Activated T-helper 1 cell treated with anti-CD3 and anti-CD28 coated beads, Interleukin-12 subunit alpha, Interleukin-12 subunit beta, Interleukin-2, Interleukin-4 antibody, amounts not matched to agents 30 ng/mL and 10 ng/mL and 1 ng/mL, durations not matched to agents 14 hours and 24 hours and 36 hours (primary cell): ENCODE measurements at regions of chr17 and their contacts with region 1.

Region 1: GRCh38 chr17:67993596-67994361 is 2.5 kb downstream of the C17orf58 start:
- DNase-seq: peak; percentile 68
- H3K4me3 Mint-ChIP-seq: peak overlapping the region; percentile 85
- H3K27ac Mint-ChIP-seq: peak overlapping the region; percentile 84
- H3K4me1 Mint-ChIP-seq: peaks cover 30% of the 10 kb centered on the region
- H3K27me3 Mint-ChIP-seq: peaks cover 26% of the 10 kb centered on the region

Region 2: DNA sequence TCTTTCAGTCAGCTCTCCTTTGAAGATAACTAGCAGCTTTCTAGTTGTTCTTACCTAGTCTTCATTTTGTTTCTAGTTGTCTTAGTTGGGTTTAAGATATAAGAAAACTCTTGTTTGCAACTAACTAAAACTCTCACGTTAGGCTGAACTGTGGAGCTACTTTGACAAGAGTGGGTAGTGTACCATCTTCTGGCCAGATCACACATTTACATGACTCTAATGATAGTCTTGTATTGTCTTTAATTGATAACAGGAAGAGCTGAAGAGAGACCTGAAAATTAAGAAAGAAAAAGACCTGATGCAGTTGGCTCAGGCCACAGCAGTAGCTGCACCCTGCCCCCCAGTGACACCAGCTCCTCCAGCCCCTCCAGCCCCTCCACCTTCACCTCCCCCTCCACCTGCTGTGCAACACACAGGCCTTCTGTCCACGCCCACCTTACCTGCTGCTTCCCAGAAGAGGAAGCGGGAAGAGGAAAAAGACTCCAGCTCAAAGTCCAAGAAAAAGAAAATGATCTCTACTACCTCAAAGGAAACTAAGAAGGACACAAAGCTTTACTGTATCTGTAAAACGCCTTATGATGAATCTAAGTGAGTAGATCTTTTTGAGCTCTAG is 34.4 kb before region 1 on chr17:
- intact Hi-C with region 1: loop called (anchors 2 kb)
- DNase-seq: no peak
- H3K4me3 Mint-ChIP-seq: no peak overlapping the region
- H3K27ac Mint-ChIP-seq: peak overlapping the region; percentile 63
- H3K4me1 Mint-ChIP-seq: peaks cover 7% of the 10 kb centered on the region
- H3K27me3 Mint-ChIP-seq: no peaks in the 10 kb centered on the region

Region 3: GRCh38 chr17:68011199-68011665 is 17.5 kb after region 1 on chr17:
- intact Hi-C with region 1: loop called (anchors 1 kb)
- DNase-seq: peak; percentile 49
- H3K4me3 Mint-ChIP-seq: peak overlapping the region; percentile 58
- H3K27ac Mint-ChIP-seq: no peak overlapping the region
- H3K4me1 Mint-ChIP-seq: peaks cover 6% of the 10 kb centered on the region
- H3K27me3 Mint-ChIP-seq: peaks cover 23% of the 10 kb centered on the region

Region 4: DNA sequence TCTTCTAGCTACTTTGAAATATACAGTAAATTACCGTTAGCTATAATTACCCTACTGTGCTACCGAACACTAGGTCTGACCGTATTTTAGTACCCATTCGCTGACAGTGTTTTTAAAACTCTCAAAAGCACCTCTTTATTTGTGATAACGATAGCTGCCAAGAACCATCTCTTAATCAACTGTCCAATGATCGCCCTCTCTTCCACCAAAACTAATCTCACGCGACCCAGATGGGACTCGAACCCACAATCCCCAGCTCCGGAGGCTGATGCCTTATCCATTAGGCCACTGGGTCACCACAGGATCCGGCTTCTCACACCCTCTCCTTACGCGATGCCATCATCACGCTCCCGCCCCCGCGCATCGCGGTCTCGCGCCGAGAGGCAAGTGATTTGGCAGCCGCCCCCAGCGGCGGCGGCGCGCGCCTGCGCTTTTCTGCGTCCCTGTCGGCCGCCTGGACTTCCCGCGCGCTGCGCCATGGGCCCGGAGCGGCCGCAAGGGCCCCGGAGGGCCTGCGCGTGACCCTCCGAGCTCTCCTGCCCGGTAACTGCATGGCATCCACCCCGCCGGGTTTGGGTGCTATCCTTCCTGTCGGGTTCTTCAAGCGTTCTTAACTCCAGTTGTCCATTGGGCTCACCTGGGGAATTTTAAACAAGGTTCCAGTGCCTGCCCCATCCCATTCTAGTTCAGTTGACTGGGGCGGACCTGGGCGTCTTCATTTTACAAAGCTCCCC is 26.1 kb after region 1 on chr17:
- intact Hi-C with region 1: loop called (anchors 1 kb)
- DNase-seq: peak; percentile 96
- H3K4me3 Mint-ChIP-seq: peak overlapping the region; percentile 87
- H3K27ac Mint-ChIP-seq: peak overlapping the region; percentile 98
- H3K4me1 Mint-ChIP-seq: peaks cover 21% of the 10 kb centered on the region
- H3K27me3 Mint-ChIP-seq: peaks cover 16% of the 10 kb centered on the region

Region 5: DNA sequence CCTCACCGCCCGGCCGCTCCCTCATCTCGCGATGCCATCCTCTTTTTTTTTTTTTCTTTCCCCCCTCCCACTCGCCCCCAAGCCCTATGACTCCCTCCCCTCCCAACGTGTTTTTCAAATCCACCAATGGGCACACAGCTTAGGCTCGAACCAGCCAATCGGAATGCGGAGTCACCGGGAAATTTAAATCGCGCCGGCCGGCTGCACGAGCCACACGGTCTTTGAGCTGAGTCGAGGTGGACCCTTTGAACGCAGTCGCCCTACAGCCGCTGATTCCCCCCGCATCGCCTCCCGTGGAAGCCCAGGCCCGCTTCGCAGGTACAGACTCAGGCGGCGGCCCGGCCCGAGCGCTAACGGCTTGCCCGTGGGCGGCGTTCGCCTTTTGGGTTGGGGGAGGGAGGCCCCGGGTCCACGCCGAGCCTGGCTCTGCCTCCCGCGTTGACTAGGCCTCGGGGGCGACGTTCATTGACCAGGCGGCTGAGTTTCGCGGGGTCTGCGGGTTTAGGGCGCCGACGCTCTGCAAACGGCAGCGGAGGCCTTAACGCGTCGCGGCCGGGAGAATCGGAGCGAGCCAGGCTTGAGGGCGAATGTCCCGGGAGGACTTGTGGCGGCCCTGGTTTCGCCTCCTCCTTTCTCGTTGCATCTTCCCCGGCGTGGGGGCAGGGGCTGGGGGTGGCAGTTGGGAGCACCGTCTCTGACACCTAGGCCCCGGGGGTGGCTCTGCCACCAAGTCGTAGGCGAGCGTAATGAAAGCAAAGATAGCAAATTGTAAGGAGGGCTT is 41.9 kb after region 1 on chr17 and contains the start of gene KPNA2:
- intact Hi-C with region 1: loop called (anchors 2 kb)
- DNase-seq: peak; percentile 93
- H3K4me3 Mint-ChIP-seq: peak within 1 kb of the TSS; percentile 96
- H3K27ac Mint-ChIP-seq: peak within 1 kb of the TSS; percentile 97
- H3K4me1 Mint-ChIP-seq: peaks cover 23% of the 10 kb centered on the region
- H3K27me3 Mint-ChIP-seq: no peaks in the 10 kb centered on the region
- total RNA-seq, gene KPNA2: 205 and 224 TPM in 2 replicates

Region 6: DNA sequence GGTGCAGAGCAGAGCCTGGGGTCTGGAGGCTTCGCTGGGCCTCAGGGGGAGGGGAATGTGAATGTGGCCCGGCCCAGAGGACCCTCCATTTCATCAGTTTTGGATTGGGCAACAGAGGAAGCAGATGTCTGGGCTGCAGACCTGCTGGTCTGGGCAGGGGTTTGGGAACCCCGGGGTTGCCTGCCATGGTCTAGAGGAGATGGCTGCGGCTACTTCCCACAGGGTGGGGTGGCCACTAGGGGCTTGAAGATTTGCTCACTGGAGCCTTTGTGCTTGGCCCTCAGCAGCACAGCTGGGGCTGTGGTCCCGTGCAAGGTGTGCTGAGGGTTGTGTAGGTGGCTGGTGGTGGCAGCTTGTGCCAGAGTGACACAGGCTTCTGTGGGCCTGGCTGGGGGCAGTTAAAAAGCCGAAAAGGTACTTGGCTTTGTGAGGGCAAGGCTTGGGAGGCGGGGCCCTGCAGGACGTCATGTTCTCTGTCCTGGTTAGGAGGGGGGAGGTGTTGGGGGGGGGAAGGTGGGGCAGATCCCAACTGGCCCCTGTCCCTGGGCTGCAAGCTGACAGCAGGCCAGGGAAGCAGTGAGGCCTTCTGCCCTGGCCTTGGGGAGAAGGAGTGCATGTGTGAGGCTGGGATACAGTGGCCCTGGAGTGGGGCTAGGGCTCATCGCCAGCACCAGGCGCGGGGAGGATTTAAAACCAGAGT is 139.7 kb after region 1 on chr17:
- intact Hi-C with region 1: no loop called
- DNase-seq: no peak
- H3K4me3 Mint-ChIP-seq: no peak overlapping the region
- H3K27ac Mint-ChIP-seq: no peak overlapping the region
- H3K4me1 Mint-ChIP-seq: no peaks in the 10 kb centered on the region
- H3K27me3 Mint-ChIP-seq: no peaks in the 10 kb centered on the region

Region 7: DNA sequence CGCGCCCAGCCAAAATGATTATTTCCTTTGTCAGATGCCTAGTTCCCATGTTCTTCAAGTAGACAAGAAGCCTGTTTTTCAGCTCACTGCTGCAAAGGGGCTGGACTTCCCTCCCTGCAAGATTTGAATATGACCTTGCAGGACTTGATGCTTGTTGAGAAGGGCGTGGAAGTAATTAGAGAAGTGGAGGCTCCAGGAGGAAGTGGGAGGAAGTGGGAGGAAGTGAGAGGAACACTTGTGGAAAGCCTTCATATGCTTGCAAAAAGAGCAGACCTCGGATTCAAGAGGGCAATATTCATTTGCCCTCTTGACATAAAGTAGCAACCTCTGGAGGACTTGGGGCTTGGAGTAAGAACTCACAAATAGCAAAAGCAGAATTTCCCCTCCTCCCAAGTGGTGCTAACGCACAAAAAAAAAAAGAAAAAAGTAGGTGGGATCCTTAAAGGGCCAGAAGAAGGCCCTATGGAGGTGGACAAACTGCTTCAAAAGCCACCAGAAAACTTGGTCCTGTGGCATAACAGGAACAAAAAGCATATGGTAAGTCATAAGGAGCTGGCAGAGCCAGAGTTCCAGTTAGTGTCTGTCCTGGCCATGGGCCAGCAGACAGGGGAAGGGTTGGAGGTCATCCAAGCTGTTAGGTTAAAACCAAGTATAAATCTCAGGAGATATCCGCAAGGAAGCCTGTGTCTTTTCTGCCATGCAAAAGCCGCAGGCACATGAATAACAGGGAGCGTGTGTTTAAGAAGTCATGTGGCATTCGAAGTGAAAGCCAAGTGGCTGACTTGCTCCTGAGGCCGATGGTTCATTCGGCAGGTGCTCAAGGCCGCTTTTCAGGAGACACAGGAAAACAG is 497.8 kb after region 1 on chr17:
- intact Hi-C with region 1: loop called (anchors 1 kb)
- DNase-seq: no peak
- H3K4me3 Mint-ChIP-seq: no peak overlapping the region
- H3K27ac Mint-ChIP-seq: no peak overlapping the region
- H3K4me1 Mint-ChIP-seq: peaks cover 20% of the 10 kb centered on the region
- H3K27me3 Mint-ChIP-seq: peaks cover 2% of the 10 kb centered on the region

Region 8: DNA sequence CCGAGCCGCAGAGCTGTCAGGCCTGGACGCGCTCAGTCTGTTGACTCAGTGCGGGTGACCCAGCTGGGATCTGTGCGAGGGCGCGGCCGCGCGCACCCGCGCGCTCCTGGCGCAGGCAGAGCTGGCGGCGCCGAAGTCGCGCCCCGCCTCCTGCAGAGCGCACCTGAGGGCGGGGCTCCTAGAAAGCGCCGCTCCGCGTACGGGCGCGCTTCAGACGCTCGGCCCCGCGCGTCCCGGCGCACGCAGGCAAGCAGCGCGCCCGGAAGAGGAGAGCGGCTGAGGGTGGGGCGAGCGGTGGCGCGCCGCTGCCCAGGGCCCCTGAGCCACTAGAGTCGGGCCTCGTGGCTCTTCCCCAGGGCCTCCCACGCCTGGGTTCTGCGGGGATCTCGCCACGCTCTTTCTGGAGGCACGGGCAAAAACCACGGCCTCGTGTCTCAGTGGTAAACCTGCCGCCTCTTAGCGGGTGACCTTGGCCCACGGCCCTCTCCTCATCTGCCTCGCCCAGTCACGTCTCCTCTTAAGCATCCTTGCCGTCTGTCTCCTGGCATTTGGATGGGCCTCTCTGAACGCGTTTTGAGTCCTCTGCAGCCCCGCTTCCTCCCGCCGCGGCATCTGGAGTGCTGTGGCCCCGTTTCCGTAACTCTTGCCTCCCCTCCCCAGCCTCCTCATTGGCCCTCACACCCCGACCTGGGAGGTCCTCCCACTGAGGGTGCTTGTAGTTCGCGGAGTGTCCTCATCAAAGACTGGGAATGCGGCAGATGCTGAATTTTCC is 1333.5 kb after region 1 on chr17 and contains the start of gene ABCA5:
- intact Hi-C with region 1: loop called (anchors 2 kb)
- DNase-seq: peak; percentile 86
- H3K4me3 Mint-ChIP-seq: peak within 1 kb of the TSS; percentile 97
- H3K27ac Mint-ChIP-seq: peak within 1 kb of the TSS; percentile 96
- H3K4me1 Mint-ChIP-seq: peaks cover 23% of the 10 kb centered on the region
- H3K27me3 Mint-ChIP-seq: peaks cover 13% of the 10 kb centered on the region
- total RNA-seq, gene ABCA5: 12.8 and 15.1 TPM in 2 replicates